ENCODE measurements at regions of chr20 and their contacts with region 1.

Region 1: DNA sequence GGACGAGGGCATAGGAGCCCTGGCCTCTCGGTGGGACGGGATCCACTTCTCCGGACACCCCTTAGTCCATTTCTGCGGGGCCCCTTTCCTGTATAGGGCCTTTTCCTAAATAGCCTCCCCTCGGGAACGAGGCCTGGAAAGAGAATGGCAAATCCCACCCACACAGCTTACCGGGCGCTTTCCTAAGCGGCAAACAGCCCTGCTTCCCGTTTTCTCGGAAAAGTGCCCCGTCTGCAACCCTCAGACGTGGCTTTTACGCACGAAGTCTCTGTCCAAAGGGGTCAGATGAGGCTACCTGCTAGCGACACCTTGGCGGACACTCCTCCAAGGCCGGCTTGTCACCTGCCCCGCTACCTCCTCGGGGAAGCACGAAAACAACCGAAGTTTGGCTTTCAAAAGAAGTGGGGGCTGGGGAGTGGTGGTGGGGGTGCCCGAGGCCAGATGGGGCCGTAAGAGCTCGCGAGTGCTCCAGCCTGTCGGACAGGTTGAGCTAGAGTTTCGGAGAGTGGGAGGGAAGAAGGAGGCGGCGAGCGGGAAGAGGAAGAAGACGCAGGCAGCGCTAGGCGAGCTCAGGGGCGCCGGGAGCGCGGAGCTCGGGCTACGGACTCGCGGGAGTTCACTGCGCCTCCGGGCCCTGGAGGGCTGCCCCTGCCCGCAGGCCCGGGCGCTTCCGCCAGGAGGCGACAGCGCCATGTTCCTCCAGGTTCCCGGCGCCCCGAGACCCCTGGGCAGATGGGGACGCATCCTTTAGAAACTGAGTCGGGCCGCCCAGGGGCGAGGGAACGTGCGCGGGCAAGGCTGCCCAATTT is 768 bp downstream of the TFAP2C start:
- DNase-seq: peak; percentile 95
- H3K4me3 ChIP-seq: peak overlapping the region; percentile 58 to 95 (median 64)
- H3K27ac ChIP-seq: peak overlapping the region; percentile 81
- H3K4me1 ChIP-seq: peaks cover 32% of the 10 kb centered on the region
- H3K27me3 ChIP-seq: peaks cover 2% of the 10 kb centered on the region
- CTCF ChIP-seq: peak; percentile 61 to 89

Region 2: DNA sequence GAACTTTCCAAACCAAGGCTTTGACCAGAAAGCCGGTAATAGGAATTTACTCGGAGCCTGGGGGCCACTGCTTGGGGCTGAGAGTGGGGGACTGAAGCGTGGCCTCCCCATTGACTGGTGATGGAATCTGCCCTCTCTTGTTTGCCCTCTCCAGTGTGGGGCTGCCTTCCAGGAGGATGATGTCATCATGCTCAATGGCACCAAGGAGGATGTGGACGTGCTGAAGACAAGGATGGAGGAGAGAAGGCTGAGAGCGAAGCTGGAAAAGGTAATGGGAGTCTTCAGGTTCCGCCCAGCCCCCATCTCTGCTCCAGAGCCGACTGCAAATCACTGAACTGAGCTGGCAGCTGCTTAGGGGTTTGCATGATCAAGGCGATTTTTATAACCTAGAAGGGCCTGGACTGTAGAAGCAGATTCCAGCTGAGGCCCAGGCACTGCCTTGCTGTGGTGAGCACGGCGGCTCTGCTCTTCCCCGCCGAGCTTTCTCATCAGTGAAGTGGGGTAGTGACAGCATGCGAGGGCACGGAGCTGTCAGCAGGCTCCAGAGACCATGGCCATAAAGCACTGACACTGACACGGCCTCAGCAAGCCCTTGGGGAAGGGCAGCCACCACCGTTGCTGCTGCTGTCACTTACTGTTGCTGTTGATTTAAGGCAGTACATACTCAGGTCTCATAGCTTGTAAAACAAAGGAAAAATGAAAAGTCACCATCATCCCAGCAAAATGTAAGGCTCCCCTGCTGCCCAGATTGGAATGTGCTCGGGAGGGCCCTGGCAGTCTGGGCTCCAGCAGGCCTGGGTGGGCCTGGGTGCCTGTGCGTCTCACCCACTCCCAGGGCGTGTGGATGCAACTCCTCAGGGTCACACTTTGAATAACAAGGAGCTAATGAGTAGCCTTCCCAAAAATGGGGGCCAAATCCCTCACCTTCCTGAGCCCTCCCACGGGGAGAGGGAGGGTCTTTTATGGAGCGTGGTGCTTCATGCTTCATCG is 116.4 kb before region 1 on chr20:
- CTCF ChIA-PET with region 1: no interaction called
- dilution Hi-C with region 1: no loop called
- in situ Hi-C with region 1: no loop called
- intact Hi-C with region 1: no loop called
- DNase-seq: no peak
- H3K4me3 ChIP-seq: no peak overlapping the region
- H3K27ac ChIP-seq: no peak overlapping the region
- H3K4me1 ChIP-seq: no peaks in the 10 kb centered on the region
- H3K27me3 ChIP-seq: no peaks in the 10 kb centered on the region
- CTCF ChIP-seq: no peak

Region 3: GRCh38 chr20:56712141-56712540 is 82.3 kb after region 1 on chr20:
- CTCF ChIA-PET with region 1: no interaction called
- dilution Hi-C with region 1: no loop called
- in situ Hi-C with region 1: no loop called
- intact Hi-C with region 1: loop called (anchors 1 kb)
- DNase-seq: peak; percentile 43
- H3K4me3 ChIP-seq: no peak overlapping the region
- H3K27ac ChIP-seq: no peak overlapping the region
- H3K4me1 ChIP-seq: peaks cover 4% of the 10 kb centered on the region
- H3K27me3 ChIP-seq: no peaks in the 10 kb centered on the region
- CTCF ChIP-seq: no peak

Region 4: DNA sequence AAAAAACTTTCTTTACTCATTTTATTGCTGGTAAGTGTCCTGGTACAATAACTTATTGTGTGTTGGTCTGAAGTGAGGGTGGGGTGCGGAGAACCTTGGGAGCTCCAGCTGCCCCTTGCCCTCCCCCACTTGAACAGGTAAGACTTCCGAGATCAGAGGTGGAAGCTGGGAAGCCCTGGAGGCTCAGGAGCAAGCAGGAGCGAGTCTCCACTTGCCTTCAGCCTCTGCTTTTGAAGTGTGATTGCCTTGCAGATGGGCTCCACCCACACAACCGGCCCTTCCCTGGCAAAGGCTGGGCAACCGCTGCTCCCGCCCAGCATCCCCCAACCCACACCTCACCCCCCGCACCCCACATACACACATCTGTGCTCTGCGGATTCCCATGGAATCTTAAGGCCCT is 178.9 kb after region 1 on chr20:
- CTCF ChIA-PET with region 1: no interaction called
- dilution Hi-C with region 1: no loop called
- in situ Hi-C with region 1: no loop called
- intact Hi-C with region 1: loop called (anchors 5 kb)
- DNase-seq: peak; percentile 78
- H3K4me3 ChIP-seq: no peak overlapping the region
- H3K27ac ChIP-seq: peak overlapping the region; percentile 38
- H3K4me1 ChIP-seq: peaks cover 42% of the 10 kb centered on the region
- H3K27me3 ChIP-seq: no peaks in the 10 kb centered on the region
- CTCF ChIP-seq: no peak

Region 5: DNA sequence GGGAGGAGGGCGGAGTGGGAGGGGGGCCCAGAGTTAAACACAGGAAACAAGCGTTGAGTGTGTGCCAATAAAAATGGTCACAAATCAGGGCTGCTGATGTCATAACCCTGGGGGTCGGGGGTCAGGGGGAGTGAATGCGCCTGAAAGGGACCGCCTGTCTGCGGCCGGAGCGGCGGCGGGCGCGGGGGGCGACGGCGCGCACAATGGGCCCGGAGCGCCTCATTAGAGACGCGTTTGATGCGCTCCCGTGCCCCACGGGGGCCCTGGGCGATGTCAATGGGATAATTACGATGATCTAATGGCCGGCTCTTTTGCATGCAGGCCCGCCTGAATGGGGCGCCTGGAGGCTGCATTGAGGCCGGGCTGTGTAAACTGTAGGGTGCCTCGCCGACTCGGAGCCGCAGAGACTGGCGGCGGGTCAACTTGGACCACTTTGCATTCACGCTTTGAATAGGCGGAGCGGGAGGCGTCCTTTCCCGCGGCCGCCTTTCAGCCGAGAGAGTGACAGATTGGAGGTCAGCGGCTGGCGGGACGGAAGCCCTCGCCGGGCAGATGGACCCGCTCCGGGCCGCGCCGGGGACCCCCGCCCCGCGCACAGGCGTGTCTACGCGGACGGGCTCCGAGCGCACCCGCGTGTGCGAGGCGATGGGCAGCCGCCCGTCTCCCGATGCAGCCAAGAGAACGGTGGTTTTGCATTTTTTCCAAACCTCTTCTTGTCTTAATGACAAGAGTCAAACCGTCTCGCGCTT is 295.4 kb after region 1 on chr20:
- CTCF ChIA-PET with region 1: no interaction called
- dilution Hi-C with region 1: no loop called
- in situ Hi-C with region 1: no loop called
- intact Hi-C with region 1: loop called (anchors 5 kb)
- DNase-seq: no peak
- H3K4me3 ChIP-seq: peak overlapping the region; percentile 23 to 37 (median 36)
- H3K27ac ChIP-seq: no peak overlapping the region
- H3K4me1 ChIP-seq: peaks cover 9% of the 10 kb centered on the region
- H3K27me3 ChIP-seq: peaks cover 19% of the 10 kb centered on the region
- CTCF ChIP-seq: no peak

Region 6: DNA sequence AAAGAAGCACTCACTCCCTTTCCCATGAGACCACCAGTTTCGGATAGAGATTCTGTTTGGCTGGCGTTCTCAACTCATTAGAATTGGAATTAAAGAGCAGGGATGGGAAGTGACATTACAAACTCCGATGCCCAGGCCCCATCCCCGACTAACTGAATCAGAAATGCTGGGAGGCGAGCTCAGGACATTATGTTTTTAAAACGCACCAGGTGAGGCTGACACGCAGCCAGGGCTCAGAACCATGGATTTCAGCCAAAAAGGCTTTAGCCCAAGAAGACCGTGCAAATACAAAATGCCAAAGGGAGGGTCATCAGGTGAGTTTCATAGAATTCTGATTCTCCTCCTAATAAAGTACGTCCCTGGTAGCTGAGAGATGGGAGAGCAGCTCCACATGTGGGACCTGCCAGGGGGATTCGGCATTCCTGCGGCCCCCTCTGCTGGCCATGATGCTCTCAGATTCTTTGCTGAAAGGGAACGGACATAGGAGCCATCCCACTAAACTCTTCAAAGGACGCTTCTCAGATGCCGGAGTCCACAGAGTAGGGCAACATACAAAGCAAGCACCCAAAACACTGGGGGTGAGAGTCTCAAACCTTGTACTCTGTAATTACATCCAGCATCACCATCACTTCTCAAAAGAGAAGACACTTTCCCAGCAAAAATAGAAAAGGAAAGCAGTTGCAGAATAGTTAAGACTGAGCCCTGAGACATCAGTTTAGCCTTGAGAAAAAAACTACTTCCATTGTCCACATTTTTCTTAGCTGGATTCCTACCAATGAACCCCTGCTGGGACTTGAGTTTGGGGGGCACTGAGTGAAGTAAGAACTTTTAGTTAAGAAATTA is 431.4 kb after region 1 on chr20:
- CTCF ChIA-PET with region 1: no interaction called
- dilution Hi-C with region 1: no loop called
- in situ Hi-C with region 1: no loop called
- intact Hi-C with region 1: loop called (anchors 2 kb)
- DNase-seq: peak; percentile 21
- H3K4me3 ChIP-seq: no peak overlapping the region
- H3K27ac ChIP-seq: peak overlapping the region; percentile 49
- H3K4me1 ChIP-seq: peaks cover 14% of the 10 kb centered on the region
- H3K27me3 ChIP-seq: no peaks in the 10 kb centered on the region
- CTCF ChIP-seq: peak; percentile 17 to 47